ENCODE measurements at regions of chr11 and their contacts with region 1.

Region 1: DNA sequence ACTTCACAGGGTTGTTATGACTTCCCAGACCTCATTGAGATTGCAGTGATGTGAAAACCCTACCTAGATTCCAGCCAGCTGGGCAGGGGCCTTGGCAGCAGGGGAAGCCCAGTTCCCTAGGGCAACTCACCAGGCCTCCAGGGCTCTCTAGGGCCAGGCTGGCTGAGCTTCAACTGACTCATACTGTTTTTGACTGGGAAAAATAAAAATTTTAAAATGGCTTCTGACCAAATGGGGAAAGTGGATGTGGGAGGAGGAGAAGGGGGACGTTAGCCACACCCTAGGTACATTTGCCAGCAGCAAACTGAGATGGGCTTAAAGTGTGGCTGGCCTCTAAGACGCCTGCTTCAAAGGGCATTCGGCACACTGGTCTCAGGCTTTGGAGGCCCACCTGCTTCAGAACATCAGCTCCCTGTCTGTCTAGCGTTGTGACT is 39.0 kb downstream of the BMAL1 start:
- DNase-seq: no peak
- H3K4me3 ChIP-seq: no peak overlapping the region
- H3K27ac ChIP-seq: no peak overlapping the region
- H3K4me1 ChIP-seq: peaks cover 0 to 11% (median 4%) of the 10 kb centered on the region in 4 experiments; a peak in 5 of 7 replicates
- H3K27me3 ChIP-seq: no peaks in the 10 kb centered on the region
- CTCF ChIP-seq: no peak
- EP300 ChIP-seq: no peak
- POLR2A ChIP-seq: no peak
- RAD21 ChIP-seq: no peak

Region 2: DNA sequence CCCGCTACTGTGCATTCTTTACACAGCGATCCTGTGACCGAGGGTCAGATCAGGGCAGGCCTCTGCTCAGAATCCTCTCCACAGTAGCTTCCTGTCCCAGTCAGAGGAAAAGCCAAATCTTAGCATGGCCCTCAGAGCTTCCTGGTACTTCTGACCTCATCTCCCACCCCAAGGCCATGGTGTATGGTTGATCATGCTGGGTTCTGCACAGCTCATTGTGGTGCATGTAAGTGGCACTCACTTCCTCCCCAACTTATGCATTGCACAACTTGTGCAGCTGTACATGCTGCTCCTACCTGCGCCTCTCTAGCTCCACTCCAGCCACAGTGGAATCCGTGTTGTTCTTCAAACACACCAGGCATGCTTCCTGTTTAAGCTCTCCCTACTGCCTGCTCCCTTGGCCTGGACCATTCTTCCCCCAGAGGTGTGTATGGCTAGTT is 18.6 kb before region 1 on chr11:
- CTCF ChIA-PET with region 1: interaction called, 12 read pairs
- POLR2A ChIA-PET with region 1: interaction called, 3 read pairs
- DNase-seq: no peak
- H3K4me3 ChIP-seq: no peak overlapping the region
- H3K27ac ChIP-seq: no peak overlapping the region
- H3K4me1 ChIP-seq: no peaks in the 10 kb centered on the region
- H3K27me3 ChIP-seq: no peaks in the 10 kb centered on the region
- CTCF ChIP-seq: no peak
- EP300 ChIP-seq: no peak
- POLR2A ChIP-seq: no peak
- RAD21 ChIP-seq: no peak

Region 3: GRCh38 chr11:13503393-13503792 is 186.8 kb after region 1 on chr11:
- CTCF ChIA-PET with region 1: no interaction called
- POLR2A ChIA-PET with region 1: no interaction called
- DNase-seq: no peak
- H3K4me3 ChIP-seq: no peak overlapping the region
- H3K27ac ChIP-seq: no peak overlapping the region
- H3K4me1 ChIP-seq: no peaks in the 10 kb centered on the region
- H3K27me3 ChIP-seq: no peaks in the 10 kb centered on the region
- CTCF ChIP-seq: no peak
- EP300 ChIP-seq: no peak
- POLR2A ChIP-seq: no peak
- RAD21 ChIP-seq: no peak

Measured in H1 (cell line).